Transverse colon (tissue), 4 donors: ENCODE measurements at regions of chrX and their contacts with region 1.

Region 1: GRCh38 chrX:15737960-15738902 is at the start of gene CA5B:
- DNase-seq: peak; percentile 99
- H3K4me3 ChIP-seq: peak within 1 kb of the TSS; percentile 28 to 54 (median 37)
- H3K27ac ChIP-seq: peak within 1 kb of the TSS in 3 of 4 donors; percentile 41 to 64 (median 54)
- H3K4me1 ChIP-seq: peaks cover 0 to 5% (median 3%) of the 10 kb centered on the region in 4 donors
- H3K27me3 ChIP-seq: no peaks in the 10 kb centered on the region
- CTCF ChIP-seq: no peak
- EP300 ChIP-seq: no peak
- POLR2A ChIP-seq: peak; percentile 45
- total RNA-seq, gene CA5B: 1.1 to 69.3 (median 4.7) TPM

Region 2: GRCh38 chrX:15686818-15687685 is 51.2 kb before region 1 on chrX:
- in situ Hi-C with region 1: no loop called
- intact Hi-C with region 1: loop called (anchors 10 kb)
- DNase-seq: peak; percentile 60
- H3K4me3 ChIP-seq: no peak overlapping the region
- H3K27ac ChIP-seq: no peak overlapping the region
- H3K4me1 ChIP-seq: no peaks in the 10 kb centered on the region
- H3K27me3 ChIP-seq: no peaks in the 10 kb centered on the region
- CTCF ChIP-seq: peak; percentile 53 to 85 (median 60)
- EP300 ChIP-seq: no peak
- POLR2A ChIP-seq: no peak

Region 3: DNA sequence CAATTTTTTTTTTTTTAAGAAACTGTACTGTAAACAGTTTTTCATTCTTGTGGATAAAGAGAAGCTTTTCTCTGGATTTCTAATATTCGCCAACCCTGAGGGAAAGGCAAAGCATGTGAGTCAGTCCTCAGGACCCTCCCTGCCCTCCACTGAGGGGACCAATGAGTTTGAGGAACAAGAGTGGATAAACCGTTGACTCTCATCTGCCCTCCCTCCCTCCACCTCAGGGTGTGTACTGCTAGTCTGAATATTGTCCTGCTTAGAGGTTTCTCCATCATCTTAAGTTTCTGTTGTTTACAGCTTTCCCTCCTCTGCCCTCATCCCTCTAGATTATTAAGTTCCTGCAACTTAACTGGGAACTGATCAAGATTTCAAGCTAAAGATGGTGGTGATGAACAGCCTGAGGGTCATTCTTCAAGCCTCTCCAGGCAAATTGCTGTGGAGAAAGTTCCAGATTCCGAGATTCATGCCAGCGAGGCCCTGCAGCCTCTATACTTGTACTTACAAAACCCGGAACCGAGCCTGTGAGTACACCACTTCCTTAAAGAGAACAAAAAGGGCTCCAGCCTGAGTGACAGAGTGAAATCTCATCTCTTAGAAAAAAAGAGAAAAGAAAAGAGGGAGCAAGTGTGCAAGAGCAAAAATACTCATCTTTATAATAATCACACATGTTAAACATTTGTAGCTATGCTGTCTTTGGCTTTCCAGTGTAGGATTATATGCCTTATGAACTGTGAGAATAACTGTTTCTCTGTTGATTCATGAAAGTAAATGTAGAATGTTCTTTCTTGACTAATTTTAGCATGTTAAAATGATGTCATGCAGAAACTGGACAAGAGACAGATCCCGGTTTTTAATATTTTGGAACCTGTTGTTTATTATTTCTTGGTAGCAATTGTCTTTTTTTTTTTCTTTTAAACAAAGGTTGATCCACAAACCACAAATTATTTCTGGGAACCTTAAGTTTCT is 11.7 kb after region 1 on chrX:
- in situ Hi-C with region 1: no loop called
- intact Hi-C with region 1: no loop called
- DNase-seq: peak; percentile 23
- H3K4me3 ChIP-seq: no peak overlapping the region
- H3K27ac ChIP-seq: peak overlapping the region; percentile 71 to 79 (median 72)
- H3K4me1 ChIP-seq: peaks cover 0 to 25% (median 6%) of the 10 kb centered on the region in 4 donors
- H3K27me3 ChIP-seq: no peaks in the 10 kb centered on the region
- CTCF ChIP-seq: no peak
- EP300 ChIP-seq: no peak
- POLR2A ChIP-seq: no peak